Panc1 (cell line): ENCODE measurements at regions of chr4 and their contacts with region 1.

Region 1: GRCh38 chr4:147749811-147750321 is 18.0 kb downstream of the ARHGAP10 start:
- DNase-seq: no peak
- ATAC-seq: no peak
- H3K4me3 ChIP-seq: no peak overlapping the region
- H3K27ac ChIP-seq: no peak overlapping the region
- H3K4me1 ChIP-seq: peaks cover 7% of the 10 kb centered on the region
- H3K27me3 ChIP-seq: no peaks in the 10 kb centered on the region
- CTCF ChIP-seq: no peak

Region 2: GRCh38 chr4:147578051-147578476 is 171.8 kb before region 1 on chr4:
- CTCF ChIA-PET with region 1: no interaction called
- POLR2A ChIA-PET with region 1: no interaction called
- in situ Hi-C with region 1: no loop called
- intact Hi-C with region 1: no loop called
- DNase-seq: peak; percentile 83
- ATAC-seq: peak; percentile 34; the same call in 1 of the 2 replicates
- H3K4me3 ChIP-seq: no peak overlapping the region
- H3K27ac ChIP-seq: no peak overlapping the region
- H3K4me1 ChIP-seq: no peaks in the 10 kb centered on the region
- H3K27me3 ChIP-seq: no peaks in the 10 kb centered on the region
- CTCF ChIP-seq: no peak

Region 3: GRCh38 chr4:147786031-147786430 is 36.2 kb after region 1 on chr4:
- CTCF ChIA-PET with region 1: no interaction called
- POLR2A ChIA-PET with region 1: interaction called, 12 read pairs
- in situ Hi-C with region 1: no loop called
- intact Hi-C with region 1: no loop called
- DNase-seq: no peak
- ATAC-seq: no peak
- H3K4me3 ChIP-seq: no peak overlapping the region
- H3K27ac ChIP-seq: no peak overlapping the region
- H3K4me1 ChIP-seq: peaks cover 26% of the 10 kb centered on the region
- H3K27me3 ChIP-seq: no peaks in the 10 kb centered on the region
- CTCF ChIP-seq: no peak